Heart left ventricle (tissue), 16 donors: ENCODE measurements at regions of chr6 and their contacts with region 1.

Region 1: DNA sequence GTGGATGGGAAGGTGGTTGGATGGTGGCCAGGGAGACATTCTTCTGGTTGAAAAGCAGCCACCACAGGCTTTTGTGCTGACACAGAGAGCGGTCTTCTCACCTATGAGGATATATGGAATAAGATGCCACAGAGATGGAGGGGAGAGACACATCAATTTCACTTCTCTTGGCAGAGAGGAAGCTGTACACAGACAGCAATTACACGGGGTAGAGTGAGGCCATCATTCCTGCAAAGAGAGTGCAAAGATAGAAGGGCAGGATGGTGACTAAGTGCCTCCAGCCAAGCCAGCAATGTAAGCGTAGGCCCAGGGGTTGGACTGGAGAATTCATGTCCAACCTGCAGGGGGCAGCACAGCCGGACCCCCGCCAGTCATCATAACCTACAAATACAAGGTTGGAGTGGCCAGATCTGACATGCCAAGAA is 56.4 kb downstream of the NRN1 start:
- DNase-seq: peak in 1 of 5 donors; percentile 24
- ATAC-seq: no peak
- H3K4me3 ChIP-seq: no peak overlapping the region
- H3K27ac ChIP-seq: no peak overlapping the region
- H3K4me1 ChIP-seq: no peaks in the 10 kb centered on the region
- H3K27me3 ChIP-seq: peaks cover 0 to 3% (median 0%) of the 10 kb centered on the region in 9 donors
- CTCF ChIP-seq: peak; percentile 39 to 63 (median 48)
- POLR2A ChIP-seq: no peak

Region 2: GRCh38 chr6:5995949-5996713 is 45.8 kb after region 1 on chr6:
- intact Hi-C with region 1: loop called in 1 of 10 experiments (anchors 5 kb)
- DNase-seq: peak; percentile 75 to 83 (median 81)
- ATAC-seq: peak; percentile 70 to 88 (median 84)
- H3K4me3 ChIP-seq: peak overlapping the region; percentile 34 to 71 (median 56)
- H3K27ac ChIP-seq: peak overlapping the region; percentile 57 to 91 (median 79)
- H3K4me1 ChIP-seq: peaks cover 0 to 60% (median 31%) of the 10 kb centered on the region in 12 donors
- H3K27me3 ChIP-seq: peaks cover 47 to 96% (median 82%) of the 10 kb centered on the region in 9 donors
- CTCF ChIP-seq: peak in 9 of 12 donors; percentile 7 to 54 (median 28)
- POLR2A ChIP-seq: no peak

Region 3: DNA sequence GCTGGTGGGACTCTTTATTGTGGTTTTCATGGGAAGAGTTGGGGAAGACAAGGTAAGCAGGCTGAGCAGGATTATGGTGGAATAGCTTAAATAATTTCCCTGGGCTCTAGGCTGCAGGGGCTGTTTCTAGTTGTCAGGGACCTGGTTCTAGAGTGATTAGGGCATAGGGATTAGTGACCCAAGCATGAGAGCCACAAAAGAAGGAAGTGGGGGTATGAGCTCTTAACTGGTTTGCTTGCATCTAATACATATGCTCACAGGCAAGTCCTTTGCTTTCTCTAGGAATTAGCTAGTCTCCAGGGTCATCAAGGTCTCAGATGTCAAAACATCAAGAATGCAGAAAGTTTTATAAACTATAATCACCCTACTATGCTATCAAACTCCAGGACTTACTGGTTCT is 123.8 kb after region 1 on chr6:
- intact Hi-C with region 1: no loop called
- DNase-seq: no peak
- ATAC-seq: no peak
- H3K4me3 ChIP-seq: no peak overlapping the region
- H3K27ac ChIP-seq: no peak overlapping the region
- H3K4me1 ChIP-seq: no peaks in the 10 kb centered on the region
- H3K27me3 ChIP-seq: peaks cover 0 to 32% (median 0%) of the 10 kb centered on the region in 9 donors
- CTCF ChIP-seq: no peak
- POLR2A ChIP-seq: no peak